Naive thymus-derived CD4-positive, alpha-beta T cell (primary cell): ENCODE measurements at regions of chr20 and their contacts with region 1.

Region 1: DNA sequence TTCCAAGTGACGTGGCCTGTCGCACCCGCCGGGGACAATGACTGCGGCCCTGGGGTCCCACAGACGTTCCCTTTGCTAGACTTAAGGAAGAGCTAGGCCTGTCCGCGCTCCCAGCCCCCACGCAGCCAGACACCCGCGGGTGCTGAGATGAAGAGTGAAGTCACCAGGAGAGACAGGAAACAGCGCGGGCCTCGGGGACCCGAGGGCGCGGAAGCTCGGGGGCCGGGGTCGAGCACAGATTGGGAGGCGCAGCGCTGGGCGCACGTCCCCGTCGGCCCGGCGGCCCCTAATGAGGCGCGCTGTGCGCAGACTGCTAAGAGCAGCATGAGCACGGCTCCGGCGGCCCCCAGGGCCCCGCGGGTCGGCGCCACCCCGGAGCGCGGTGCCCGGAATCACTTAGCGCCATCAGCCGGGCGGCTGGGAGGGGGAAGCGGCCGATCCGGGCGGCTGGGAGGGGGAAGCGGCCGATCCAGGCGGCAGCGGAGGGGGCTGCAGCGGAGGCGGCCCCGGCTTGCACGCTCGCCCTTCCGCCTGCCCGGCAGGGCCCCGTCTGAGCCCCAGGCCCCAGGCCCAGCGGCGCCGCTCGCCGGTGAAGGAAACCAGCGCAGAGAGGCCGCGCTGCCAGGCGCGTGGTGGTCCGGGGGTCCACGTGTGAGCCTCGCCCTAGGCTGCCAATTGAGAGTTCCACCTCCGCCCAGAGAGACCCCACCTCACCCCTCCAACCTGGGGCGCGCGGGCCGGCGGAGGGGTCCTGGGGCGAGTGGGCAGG is 8.3 kb upstream of the AVP start:
- DNase-seq: peak in 8 of 9 donors; percentile 41 to 75 (median 70)
- ATAC-seq: peak; percentile 27
- H3K4me3 ChIP-seq: peak overlapping the region; percentile 28
- H3K4me3 Mint-ChIP-seq: peak overlapping the region; percentile 78 to 97 (median 93)
- H3K27ac ChIP-seq: peak overlapping the region; percentile 95
- H3K27ac Mint-ChIP-seq: peak overlapping the region; percentile 88 to 100 (median 100)
- H3K4me1 ChIP-seq: peaks cover 0 to 24% of the 10 kb centered on the region in 2 donors
- H3K4me1 Mint-ChIP-seq: peaks cover 17 to 50% (median 31%) of the 10 kb centered on the region in 7 donors
- H3K27me3 ChIP-seq: no peaks in the 10 kb centered on the region
- H3K27me3 Mint-ChIP-seq: peaks cover 0 to 39% (median 0%) of the 10 kb centered on the region in 5 donors

Region 2: GRCh38 chr20:2849529-2849928 is 243.3 kb before region 1 on chr20:
- CTCF ChIA-PET with region 1: no interaction called
- POLR2A ChIA-PET with region 1: no interaction called
- intact Hi-C with region 1: no loop called
- DNase-seq: no peak
- ATAC-seq: no peak
- H3K4me3 ChIP-seq: no peak overlapping the region
- H3K4me3 Mint-ChIP-seq: no peak overlapping the region
- H3K27ac ChIP-seq: no peak overlapping the region
- H3K27ac Mint-ChIP-seq: peak overlapping the region in 1 of 9 donors; percentile 18
- H3K4me1 ChIP-seq: peaks cover 0 to 10% of the 10 kb centered on the region in 2 donors
- H3K4me1 Mint-ChIP-seq: peaks cover 14 to 34% (median 27%) of the 10 kb centered on the region in 7 donors
- H3K27me3 ChIP-seq: no peaks in the 10 kb centered on the region
- H3K27me3 Mint-ChIP-seq: no peaks in the 10 kb centered on the region

Region 3: DNA sequence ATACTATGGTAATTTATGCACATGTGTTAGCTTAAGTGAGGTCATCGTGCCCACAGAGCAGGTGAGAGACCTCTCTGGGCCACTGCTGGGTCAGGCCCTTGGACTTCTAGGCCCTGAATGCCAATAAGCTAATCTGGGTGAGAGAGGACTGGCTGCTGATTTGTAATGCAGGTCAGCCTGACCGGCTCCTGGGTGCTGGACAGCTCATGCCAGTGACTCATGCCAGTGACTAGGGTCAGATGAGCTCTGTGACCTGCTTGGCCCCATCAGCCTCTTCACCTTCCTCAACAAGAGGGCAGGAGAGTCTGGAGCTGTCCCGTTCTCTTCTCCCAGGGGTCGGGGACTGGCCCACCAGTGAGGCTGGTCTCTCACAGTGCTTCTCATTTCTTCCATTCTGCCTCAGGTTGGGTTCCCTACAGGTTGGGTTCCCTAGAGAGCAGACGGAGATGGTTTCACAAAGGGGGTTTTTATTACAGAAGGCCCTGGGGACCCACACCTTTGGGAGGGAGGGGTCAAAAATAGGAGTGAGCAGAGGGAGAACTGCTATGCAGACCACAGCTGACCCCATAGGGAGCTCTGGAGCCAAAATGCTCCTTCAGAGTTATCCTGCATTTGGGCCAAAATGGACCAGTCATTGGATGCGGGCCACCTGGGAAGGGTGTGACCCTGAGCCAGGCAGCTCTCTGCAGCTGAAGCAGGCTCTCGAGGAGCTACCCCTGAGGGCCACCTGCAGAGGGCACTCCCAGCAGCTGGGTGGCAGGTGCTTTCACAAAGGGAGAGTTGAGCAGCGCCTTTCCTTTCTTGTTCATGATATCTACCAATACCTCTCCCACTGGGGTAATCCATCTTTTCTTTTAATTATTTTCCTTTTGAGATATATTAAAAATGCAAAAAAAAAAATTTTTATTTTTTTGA is 23.6 kb before region 1 on chr20:
- CTCF ChIA-PET with region 1: interaction called, 5 read pairs
- POLR2A ChIA-PET with region 1: interaction called, 61 read pairs
- intact Hi-C with region 1: loop called in 1 of 2 experiments (anchors 1 kb)
- DNase-seq: peak in 7 of 9 donors; percentile 52 to 73 (median 62)
- ATAC-seq: peak; percentile 61
- H3K4me3 ChIP-seq: no peak overlapping the region
- H3K4me3 Mint-ChIP-seq: peak overlapping the region in 1 of 10 donors; percentile 25
- H3K27ac ChIP-seq: no peak overlapping the region
- H3K27ac Mint-ChIP-seq: peak overlapping the region in 4 of 9 donors; percentile 32 to 77 (median 52)
- H3K4me1 ChIP-seq: peaks cover 0 to 17% of the 10 kb centered on the region in 2 donors
- H3K4me1 Mint-ChIP-seq: peaks cover 8 to 38% (median 27%) of the 10 kb centered on the region in 7 donors
- H3K27me3 ChIP-seq: no peaks in the 10 kb centered on the region
- H3K27me3 Mint-ChIP-seq: peaks cover 0 to 2% (median 0%) of the 10 kb centered on the region in 5 donors

Region 4: GRCh38 chr20:3082306-3082951 is 10.4 kb before region 1 on chr20:
- CTCF ChIA-PET with region 1: interaction called, 11 read pairs
- POLR2A ChIA-PET with region 1: interaction called, 56 read pairs
- intact Hi-C with region 1: loop called in 1 of 2 experiments (anchors 1 kb)
- DNase-seq: peak in 1 of 9 donors; percentile 10
- ATAC-seq: peak; percentile 35
- H3K4me3 ChIP-seq: peak overlapping the region; percentile 24
- H3K4me3 Mint-ChIP-seq: peak overlapping the region; percentile 62 to 83 (median 72)
- H3K27ac ChIP-seq: no peak overlapping the region
- H3K27ac Mint-ChIP-seq: no peak overlapping the region
- H3K4me1 ChIP-seq: peaks cover 0 to 14% of the 10 kb centered on the region in 2 donors
- H3K4me1 Mint-ChIP-seq: peaks cover 11 to 19% (median 17%) of the 10 kb centered on the region in 7 donors
- H3K27me3 ChIP-seq: peaks cover 0 to 13% of the 10 kb centered on the region in 2 donors
- H3K27me3 Mint-ChIP-seq: peaks cover 8 to 62% (median 23%) of the 10 kb centered on the region in 5 donors

Region 5: DNA sequence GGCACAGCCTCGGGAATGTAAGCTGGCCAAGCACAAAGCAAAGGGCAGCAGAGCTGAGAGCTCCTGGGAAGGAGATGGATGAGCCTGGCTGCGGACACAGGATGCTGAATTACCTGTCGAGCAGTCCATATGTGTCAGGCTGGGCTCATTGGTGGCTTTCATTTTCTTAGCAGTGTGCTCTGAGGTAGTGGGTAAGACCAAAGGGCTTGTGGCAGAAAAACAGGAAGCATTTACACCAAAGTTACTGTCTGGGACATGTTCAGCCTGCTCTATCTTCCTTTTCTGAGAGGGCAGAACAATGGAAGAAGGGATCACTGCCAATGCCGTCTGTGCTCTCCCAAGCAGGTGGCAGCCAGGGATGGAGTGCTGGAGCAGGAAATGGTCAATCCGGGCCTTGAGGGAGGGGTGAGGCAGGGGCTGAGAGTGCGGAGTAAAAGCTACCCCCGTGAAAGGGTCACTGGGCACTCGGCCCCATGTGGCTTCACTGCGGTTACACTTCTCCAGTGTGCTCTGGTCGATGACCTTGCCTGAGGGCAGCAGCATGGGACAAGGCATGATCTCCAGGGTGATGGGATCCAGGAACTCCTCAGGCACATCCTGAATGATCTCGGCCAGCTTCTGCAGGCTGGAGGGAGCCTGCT is 28.6 kb after region 1 on chr20:
- CTCF ChIA-PET with region 1: interaction called, 36 read pairs
- POLR2A ChIA-PET with region 1: interaction called, 22 read pairs
- intact Hi-C with region 1: no loop called
- DNase-seq: peak in 7 of 9 donors; percentile 49 to 75 (median 72)
- ATAC-seq: peak; percentile 85
- H3K4me3 ChIP-seq: peak overlapping the region; percentile 46
- H3K4me3 Mint-ChIP-seq: peak overlapping the region; percentile 68 to 91 (median 83)
- H3K27ac ChIP-seq: peak overlapping the region; percentile 82
- H3K27ac Mint-ChIP-seq: peak overlapping the region; percentile 97 to 100 (median 99)
- H3K4me1 ChIP-seq: peaks cover 5 to 37% of the 10 kb centered on the region in 2 donors
- H3K4me1 Mint-ChIP-seq: peaks cover 22 to 66% (median 51%) of the 10 kb centered on the region in 7 donors
- H3K27me3 ChIP-seq: no peaks in the 10 kb centered on the region
- H3K27me3 Mint-ChIP-seq: no peaks in the 10 kb centered on the region

Region 6: DNA sequence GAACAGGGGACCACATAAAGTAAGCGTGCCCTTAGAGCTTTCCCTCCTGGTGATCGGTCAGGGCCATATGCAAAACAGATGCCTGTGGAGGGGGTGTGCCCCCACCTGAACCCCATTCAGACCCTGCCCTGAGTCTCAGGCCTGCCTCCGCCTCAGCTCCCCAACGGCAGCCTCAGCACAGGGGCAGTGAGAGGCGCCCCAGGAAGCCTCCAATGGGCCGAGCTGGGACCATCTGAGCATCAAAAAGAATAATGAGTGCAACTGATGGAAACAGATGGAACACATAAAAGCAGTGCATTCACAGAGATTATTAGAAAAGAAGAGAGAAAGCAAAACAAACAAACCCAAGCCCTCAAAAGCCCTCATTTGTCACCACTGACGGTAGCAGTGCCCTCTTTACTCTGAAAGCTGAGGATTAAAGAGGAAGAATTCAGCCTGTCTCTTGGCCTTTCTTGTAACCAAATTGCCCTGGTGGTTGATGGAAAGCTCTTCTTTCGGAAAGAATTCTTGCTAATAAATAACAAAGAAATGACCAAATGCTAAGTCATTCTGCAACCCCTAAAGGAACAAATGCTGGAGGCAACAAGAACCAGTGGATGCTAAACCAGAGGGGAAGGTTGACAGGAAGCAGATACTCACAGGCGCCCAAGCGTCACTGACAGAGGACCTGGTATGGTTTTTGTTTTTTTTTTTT is 668.0 kb after region 1 on chr20:
- CTCF ChIA-PET with region 1: no interaction called
- POLR2A ChIA-PET with region 1: no interaction called
- intact Hi-C with region 1: no loop called
- DNase-seq: no peak
- ATAC-seq: no peak
- H3K4me3 ChIP-seq: no peak overlapping the region
- H3K4me3 Mint-ChIP-seq: no peak overlapping the region
- H3K27ac ChIP-seq: no peak overlapping the region
- H3K27ac Mint-ChIP-seq: peak overlapping the region in 1 of 9 donors; percentile 11
- H3K4me1 ChIP-seq: no peaks in the 10 kb centered on the region
- H3K4me1 Mint-ChIP-seq: peaks cover 0 to 14% (median 4%) of the 10 kb centered on the region in 7 donors
- H3K27me3 ChIP-seq: no peaks in the 10 kb centered on the region
- H3K27me3 Mint-ChIP-seq: no peaks in the 10 kb centered on the region